Transverse colon (tissue), 4 donors: ENCODE measurements at regions of chr13 and their contacts with region 1.

Region 1: DNA sequence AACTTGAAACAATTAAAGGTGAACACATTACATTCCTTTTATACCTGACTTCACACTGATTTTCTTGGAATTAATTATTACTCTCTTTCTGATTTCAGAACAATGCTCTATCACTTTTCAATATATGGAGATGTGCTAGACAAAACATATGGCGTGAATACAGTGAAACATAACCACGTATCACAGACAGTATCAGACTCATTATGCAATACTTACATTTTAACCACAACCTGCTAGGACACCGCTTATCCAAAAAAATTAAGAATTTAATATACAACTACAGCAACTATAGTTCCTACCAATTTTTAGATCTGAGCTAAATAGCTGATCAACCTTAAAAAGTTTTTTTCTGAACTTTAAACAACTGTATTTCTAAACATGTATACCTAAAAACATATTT is 9.9 kb downstream of the HSPH1 start:
- DNase-seq: no peak
- H3K4me3 ChIP-seq: no peak overlapping the region
- H3K27ac ChIP-seq: no peak overlapping the region
- H3K4me1 ChIP-seq: no peaks in the 10 kb centered on the region
- H3K27me3 ChIP-seq: no peaks in the 10 kb centered on the region
- CTCF ChIP-seq: no peak
- EP300 ChIP-seq: no peak
- POLR2A ChIP-seq: no peak

Region 2: DNA sequence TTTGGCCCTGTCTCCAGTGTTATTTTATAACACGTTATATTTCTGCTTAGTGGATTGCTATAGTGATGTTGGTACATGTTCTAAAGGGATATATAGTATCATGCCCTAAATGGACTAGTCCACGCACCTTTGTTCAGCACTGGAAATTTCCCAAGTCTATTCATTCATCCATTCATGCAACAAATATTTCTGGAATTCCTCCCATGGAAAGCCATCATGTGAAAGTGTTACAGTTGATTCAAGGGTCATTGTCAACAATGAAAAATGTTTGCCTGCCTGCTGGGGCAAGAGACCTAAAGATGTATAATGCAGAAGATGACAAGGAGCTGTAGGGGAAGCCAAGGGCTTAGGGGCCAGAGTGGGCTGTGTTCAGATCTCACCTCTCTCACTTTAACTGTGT is 20.7 kb after region 1 on chr13:
- in situ Hi-C with region 1: no loop called
- intact Hi-C with region 1: loop called (anchors 2 kb)
- DNase-seq: no peak
- H3K4me3 ChIP-seq: no peak overlapping the region
- H3K27ac ChIP-seq: no peak overlapping the region
- H3K4me1 ChIP-seq: peaks cover 0 to 7% (median 0%) of the 10 kb centered on the region in 4 donors
- H3K27me3 ChIP-seq: no peaks in the 10 kb centered on the region
- CTCF ChIP-seq: no peak
- EP300 ChIP-seq: no peak
- POLR2A ChIP-seq: no peak